Activated CD4-positive, alpha-beta memory T cell treated with anti-CD3 and anti-CD28 coated beads for 36 hours (primary cell): ENCODE measurements at regions of chr14 and their contacts with region 1.

Region 1: DNA sequence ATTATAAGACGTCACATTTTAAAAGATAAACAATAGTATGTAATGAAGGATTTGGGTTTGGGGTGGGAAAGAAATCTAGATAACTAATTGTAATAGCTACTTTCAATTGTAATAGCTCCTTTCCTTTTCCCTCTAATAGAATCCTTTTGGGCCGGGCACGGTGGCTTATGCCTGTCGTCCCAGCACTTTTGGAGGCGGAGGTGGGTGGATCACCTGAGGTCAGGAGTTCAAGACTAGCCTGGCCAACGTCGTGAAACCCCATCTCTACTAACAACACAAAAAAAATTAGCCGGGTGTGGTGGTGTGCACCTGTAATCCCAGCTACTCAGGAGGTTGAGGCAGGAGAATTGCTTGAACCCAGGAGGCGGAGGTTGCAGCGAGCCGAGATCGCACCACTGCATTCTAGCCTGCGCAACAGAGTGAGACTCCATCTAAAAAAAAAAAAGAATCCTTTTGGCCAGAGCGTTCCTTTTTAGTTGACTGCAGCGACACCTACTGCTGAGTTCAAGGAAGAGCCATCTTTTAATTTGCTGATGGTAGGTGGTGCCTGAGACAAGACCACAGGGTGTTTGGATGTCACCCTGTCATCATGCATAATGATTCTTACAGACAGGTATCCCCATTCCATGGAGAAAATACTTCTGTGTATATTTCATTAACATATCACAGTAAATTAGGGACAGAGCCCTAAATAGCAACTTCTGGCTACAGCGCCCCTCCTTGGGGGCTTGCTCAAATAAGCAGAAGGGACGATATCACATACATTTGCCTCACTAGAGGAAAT is 79.5 kb downstream of the ARMH4 start:
- DNase-seq: peak; percentile 53
- H3K4me3 Mint-ChIP-seq: no peak overlapping the region
- H3K27ac Mint-ChIP-seq: no peak overlapping the region
- H3K4me1 Mint-ChIP-seq: no peaks in the 10 kb centered on the region
- H3K27me3 Mint-ChIP-seq: peaks cover 5% of the 10 kb centered on the region

Region 2: DNA sequence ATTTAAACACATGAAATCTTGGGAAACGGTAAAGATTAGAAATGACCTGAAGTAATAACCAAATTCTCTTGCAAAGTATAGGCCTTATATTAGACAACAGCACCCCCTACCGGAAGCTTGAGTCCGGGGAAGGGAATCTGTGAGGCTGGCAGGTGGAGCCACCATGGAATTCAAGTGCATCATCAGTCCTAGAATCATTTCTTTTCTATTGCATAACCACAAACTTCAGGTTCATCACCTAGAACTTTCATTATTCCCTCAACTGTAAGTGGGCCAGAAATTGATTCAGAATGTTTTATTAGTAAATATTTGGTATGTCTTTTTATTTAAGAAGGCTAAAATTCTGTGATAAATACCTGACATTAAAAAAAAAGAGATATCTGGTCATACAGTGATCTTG is 755.2 kb before region 1 on chr14:
- CTCF ChIA-PET with region 1: no interaction called
- POLR2A ChIA-PET with region 1: no interaction called
- intact Hi-C with region 1: loop called (anchors 5 kb)
- DNase-seq: peak; percentile 73
- H3K4me3 Mint-ChIP-seq: no peak overlapping the region
- H3K27ac Mint-ChIP-seq: no peak overlapping the region
- H3K4me1 Mint-ChIP-seq: peaks cover 3% of the 10 kb centered on the region
- H3K27me3 Mint-ChIP-seq: no peaks in the 10 kb centered on the region

Region 3: GRCh38 chr14:57486767-57487379 is 585.6 kb before region 1 on chr14:
- CTCF ChIA-PET with region 1: interaction called, 4 read pairs
- POLR2A ChIA-PET with region 1: no interaction called
- intact Hi-C with region 1: loop called (anchors 1 kb)
- DNase-seq: no peak
- H3K4me3 Mint-ChIP-seq: no peak overlapping the region
- H3K27ac Mint-ChIP-seq: no peak overlapping the region
- H3K4me1 Mint-ChIP-seq: no peaks in the 10 kb centered on the region
- H3K27me3 Mint-ChIP-seq: peaks cover 2% of the 10 kb centered on the region

Region 4: DNA sequence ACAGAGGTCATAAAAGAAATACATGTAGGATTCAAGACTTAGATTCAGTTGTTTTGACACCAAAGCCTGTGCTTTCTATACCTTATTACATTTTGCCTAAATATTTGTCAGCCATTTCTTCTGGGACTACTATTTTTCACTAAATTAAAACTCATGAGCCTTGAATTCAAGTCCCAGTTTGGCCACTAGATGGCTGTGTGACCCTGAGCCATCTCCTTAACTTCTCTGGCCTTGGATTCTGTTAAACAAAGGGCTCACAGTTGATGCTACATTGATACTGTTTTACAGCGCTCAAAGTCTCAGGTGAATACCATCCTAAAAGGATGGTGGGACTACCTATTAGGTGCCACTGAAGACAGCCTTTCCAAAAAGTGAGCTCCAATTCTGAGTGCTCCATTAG is 539.3 kb before region 1 on chr14:
- CTCF ChIA-PET with region 1: interaction called, 3 read pairs
- POLR2A ChIA-PET with region 1: no interaction called
- intact Hi-C with region 1: loop called (anchors 1 kb)
- DNase-seq: peak; percentile 20
- H3K4me3 Mint-ChIP-seq: no peak overlapping the region
- H3K27ac Mint-ChIP-seq: no peak overlapping the region
- H3K4me1 Mint-ChIP-seq: no peaks in the 10 kb centered on the region
- H3K27me3 Mint-ChIP-seq: peaks cover 7% of the 10 kb centered on the region

Region 5: DNA sequence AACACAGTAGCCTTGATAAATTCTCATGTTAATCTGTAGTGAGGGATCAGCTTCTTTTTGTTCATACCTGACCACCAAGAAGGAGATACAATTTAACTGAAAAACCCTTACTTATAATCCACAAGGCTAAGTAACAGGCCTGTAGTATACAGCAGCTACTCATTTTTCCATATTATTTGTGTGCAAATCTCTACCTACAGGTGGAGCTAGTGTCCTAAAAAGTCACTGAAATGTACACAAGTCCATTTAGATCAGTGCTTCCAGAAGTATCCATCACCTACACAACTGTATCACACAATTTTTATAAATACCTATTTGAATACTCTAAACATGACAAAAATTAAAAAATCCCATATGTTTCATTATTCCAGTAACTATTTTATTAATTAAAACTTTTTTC is 379.8 kb before region 1 on chr14:
- CTCF ChIA-PET with region 1: no interaction called
- POLR2A ChIA-PET with region 1: no interaction called
- intact Hi-C with region 1: loop called (anchors 2 kb)
- DNase-seq: no peak
- H3K4me3 Mint-ChIP-seq: no peak overlapping the region
- H3K27ac Mint-ChIP-seq: no peak overlapping the region
- H3K4me1 Mint-ChIP-seq: no peaks in the 10 kb centered on the region
- H3K27me3 Mint-ChIP-seq: no peaks in the 10 kb centered on the region

Region 6: DNA sequence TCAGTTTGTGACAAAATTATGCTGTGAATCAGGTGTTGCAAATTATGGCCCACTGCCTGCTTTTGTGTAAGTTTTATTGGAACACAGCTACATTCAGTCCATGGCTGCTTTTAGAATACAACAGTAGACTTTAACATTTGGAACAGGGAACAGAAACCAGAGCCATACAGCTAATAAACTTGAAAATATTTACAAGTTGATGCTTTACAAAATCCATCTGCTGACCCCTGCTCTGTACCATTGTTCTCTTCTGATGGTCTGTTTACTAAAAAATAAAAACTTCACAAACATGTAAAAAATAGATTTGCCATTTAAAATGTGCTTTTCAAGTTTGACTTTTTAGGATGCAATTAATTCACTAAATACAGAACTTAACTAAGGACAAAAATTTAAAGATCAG is 192.9 kb after region 1 on chr14:
- CTCF ChIA-PET with region 1: no interaction called
- POLR2A ChIA-PET with region 1: no interaction called
- intact Hi-C with region 1: no loop called
- DNase-seq: no peak
- H3K4me3 Mint-ChIP-seq: no peak overlapping the region
- H3K27ac Mint-ChIP-seq: no peak overlapping the region
- H3K4me1 Mint-ChIP-seq: peaks cover 14% of the 10 kb centered on the region
- H3K27me3 Mint-ChIP-seq: no peaks in the 10 kb centered on the region